Common myeloid progenitor, CD34-positive (primary cell): ENCODE measurements at regions of chr4 and their contacts with region 1.

Region 1: GRCh38 chr4:73573794-73574406 is 46.3 kb downstream of the RASSF6 start:
- DNase-seq: peak; percentile 77 to 84 (median 78)
- H3K4me3 ChIP-seq: no peak overlapping the region
- H3K27ac ChIP-seq: no peak overlapping the region
- H3K4me1 ChIP-seq: peaks cover 0 to 4% (median 0%) of the 10 kb centered on the region in 4 experiments
- H3K27me3 ChIP-seq: no peaks in the 10 kb centered on the region

Region 2: DNA sequence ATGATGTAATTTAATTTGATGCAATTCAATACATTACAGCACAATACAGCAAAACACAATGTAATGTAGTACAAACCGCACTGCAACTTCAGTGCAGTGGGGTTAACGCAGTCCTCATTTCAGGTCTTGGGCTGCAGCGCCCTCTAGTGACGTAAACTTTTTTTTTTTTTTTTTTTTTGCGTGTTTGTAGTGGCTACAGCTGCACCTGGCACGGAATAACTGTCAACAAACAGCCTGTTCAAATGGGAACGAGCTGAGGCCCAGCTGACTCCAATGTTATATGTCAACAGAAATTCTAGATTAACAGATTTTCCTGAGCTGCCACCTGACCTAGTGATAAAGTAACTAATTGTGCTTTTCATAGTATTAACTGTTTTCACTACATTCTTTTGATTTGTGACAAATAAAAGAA is 79.8 kb after region 1 on chr4:
- CTCF ChIA-PET with region 1: interaction called, 53 read pairs
- POLR2A ChIA-PET with region 1: no interaction called
- DNase-seq: peak; percentile 67 to 89 (median 88)
- H3K4me3 ChIP-seq: no peak overlapping the region
- H3K27ac ChIP-seq: no peak overlapping the region
- H3K4me1 ChIP-seq: peaks cover 0 to 7% (median 7%) of the 10 kb centered on the region in 4 experiments
- H3K27me3 ChIP-seq: no peaks in the 10 kb centered on the region